Activated CD8-positive, alpha-beta T cell treated with anti-CD3 and anti-CD28 coated beads for 36 hours (primary cell): ENCODE measurements at regions of chr15 and their contacts with region 1.

Region 1: GRCh38 chr15:63891079-63891767 is 57.5 kb upstream of the HERC1 start:
- DNase-seq: peak; percentile 88
- ATAC-seq: peak; percentile 19
- H3K4me3 Mint-ChIP-seq: no peak overlapping the region
- H3K27ac Mint-ChIP-seq: no peak overlapping the region
- H3K4me1 Mint-ChIP-seq: peaks cover 62% of the 10 kb centered on the region
- H3K27me3 Mint-ChIP-seq: no peaks in the 10 kb centered on the region
- CTCF ChIP-seq: peak; percentile 85

Region 2: DNA sequence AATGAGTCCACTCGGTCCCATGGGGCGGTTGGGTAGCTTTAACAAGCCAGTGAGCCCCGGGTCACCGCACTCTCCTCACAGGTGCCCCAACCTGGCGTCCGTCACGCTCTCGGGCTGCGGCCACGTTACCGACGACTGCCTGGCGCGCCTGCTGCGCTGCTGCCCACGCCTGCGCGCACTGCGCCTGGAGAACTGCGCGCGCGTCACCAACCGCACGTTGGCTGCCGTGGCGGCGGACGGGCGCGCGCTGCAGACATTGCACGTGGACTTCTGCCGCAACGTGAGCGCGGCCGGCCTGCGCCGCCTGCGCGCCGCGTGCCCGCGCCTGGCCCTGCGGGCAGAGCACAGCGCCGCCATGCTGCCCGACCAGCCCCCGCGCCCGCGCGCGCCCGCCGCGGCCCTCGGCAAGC is 290.6 kb before region 1 on chr15:
- CTCF ChIA-PET with region 1: no interaction called
- POLR2A ChIA-PET with region 1: no interaction called
- intact Hi-C with region 1: loop called (anchors 10 kb)
- DNase-seq: peak; percentile 93
- ATAC-seq: peak; percentile 76
- H3K4me3 Mint-ChIP-seq: peak overlapping the region; percentile 87
- H3K27ac Mint-ChIP-seq: peak overlapping the region; percentile 96
- H3K4me1 Mint-ChIP-seq: peaks cover 52% of the 10 kb centered on the region
- H3K27me3 Mint-ChIP-seq: no peaks in the 10 kb centered on the region
- CTCF ChIP-seq: no peak

Region 3: GRCh38 chr15:63818191-63818590 is 73.0 kb before region 1 on chr15:
- CTCF ChIA-PET with region 1: interaction called, 10 read pairs
- POLR2A ChIA-PET with region 1: no interaction called
- intact Hi-C with region 1: no loop called
- DNase-seq: no peak
- ATAC-seq: no peak
- H3K4me3 Mint-ChIP-seq: peak overlapping the region; percentile 36
- H3K27ac Mint-ChIP-seq: peak overlapping the region; percentile 56
- H3K4me1 Mint-ChIP-seq: peaks cover 68% of the 10 kb centered on the region
- H3K27me3 Mint-ChIP-seq: no peaks in the 10 kb centered on the region
- CTCF ChIP-seq: no peak

Region 4: GRCh38 chr15:63833021-63833696 is 58.1 kb before region 1 on chr15:
- CTCF ChIA-PET with region 1: interaction called, 8 read pairs
- POLR2A ChIA-PET with region 1: interaction called, 4 read pairs
- intact Hi-C with region 1: loop called (anchors 5 kb)
- DNase-seq: peak; percentile 50
- ATAC-seq: peak; percentile 53
- H3K4me3 Mint-ChIP-seq: peak overlapping the region; percentile 81
- H3K27ac Mint-ChIP-seq: peak overlapping the region; percentile 99
- H3K4me1 Mint-ChIP-seq: peaks cover 41% of the 10 kb centered on the region
- H3K27me3 Mint-ChIP-seq: no peaks in the 10 kb centered on the region
- CTCF ChIP-seq: no peak

Region 5: DNA sequence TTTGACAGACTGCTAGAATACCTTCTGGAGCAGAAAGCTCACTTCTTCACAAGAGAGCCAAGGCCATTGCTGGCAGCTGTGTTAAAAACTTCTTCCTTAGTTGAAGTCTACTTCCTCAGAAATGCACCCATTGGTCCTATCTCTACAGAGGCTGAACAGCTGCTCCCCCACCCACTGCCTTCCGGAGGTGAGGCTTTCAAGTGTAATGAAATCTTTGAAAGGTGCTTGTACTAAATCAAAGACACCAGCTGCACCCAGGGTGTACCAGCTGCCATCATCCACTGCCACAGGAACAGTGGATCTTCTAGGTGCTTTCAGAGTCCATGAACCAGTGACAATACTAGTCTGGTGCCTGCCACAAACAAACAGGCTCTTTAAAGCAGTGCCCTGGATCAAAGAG is 31.1 kb before region 1 on chr15:
- CTCF ChIA-PET with region 1: interaction called, 24 read pairs
- POLR2A ChIA-PET with region 1: interaction called, 4 read pairs
- intact Hi-C with region 1: no loop called
- DNase-seq: peak; percentile 78
- ATAC-seq: peak; percentile 74
- H3K4me3 Mint-ChIP-seq: no peak overlapping the region
- H3K27ac Mint-ChIP-seq: peak overlapping the region; percentile 85
- H3K4me1 Mint-ChIP-seq: peaks cover 35% of the 10 kb centered on the region
- H3K27me3 Mint-ChIP-seq: no peaks in the 10 kb centered on the region
- CTCF ChIP-seq: no peak

Region 6: DNA sequence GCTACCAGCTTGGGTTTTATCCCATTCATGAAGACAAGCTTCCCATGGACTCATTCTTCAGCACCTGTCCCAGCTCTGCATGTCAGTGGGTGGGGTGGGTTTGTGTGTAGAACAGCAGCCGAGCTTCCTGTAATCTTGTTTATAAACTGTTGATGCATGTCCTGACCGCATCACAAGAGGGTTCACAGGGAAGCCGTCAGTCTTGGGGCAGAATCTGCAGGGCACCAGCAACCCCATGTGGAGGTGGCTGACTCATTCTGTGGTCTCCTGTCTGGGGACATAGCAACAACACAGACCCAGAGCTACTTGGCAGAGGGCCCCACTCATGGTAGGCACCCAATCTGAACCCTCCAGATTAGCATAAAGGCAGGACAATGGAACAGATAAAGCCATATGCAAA is 119.5 kb after region 1 on chr15:
- CTCF ChIA-PET with region 1: no interaction called
- POLR2A ChIA-PET with region 1: interaction called, 3 read pairs
- intact Hi-C with region 1: loop called (anchors 5 kb)
- DNase-seq: peak; percentile 95
- ATAC-seq: peak; percentile 88
- H3K4me3 Mint-ChIP-seq: peak overlapping the region; percentile 22
- H3K27ac Mint-ChIP-seq: peak overlapping the region; percentile 88
- H3K4me1 Mint-ChIP-seq: peaks cover 37% of the 10 kb centered on the region
- H3K27me3 Mint-ChIP-seq: no peaks in the 10 kb centered on the region
- CTCF ChIP-seq: no peak

Region 7: GRCh38 chr15:64067564-64068030 is 176.4 kb after region 1 on chr15:
- CTCF ChIA-PET with region 1: interaction called, 26 read pairs
- POLR2A ChIA-PET with region 1: no interaction called
- intact Hi-C with region 1: no loop called
- DNase-seq: peak; percentile 80
- ATAC-seq: peak; percentile 89
- H3K4me3 Mint-ChIP-seq: no peak overlapping the region
- H3K27ac Mint-ChIP-seq: no peak overlapping the region
- H3K4me1 Mint-ChIP-seq: peaks cover 4% of the 10 kb centered on the region
- H3K27me3 Mint-ChIP-seq: no peaks in the 10 kb centered on the region
- CTCF ChIP-seq: peak; percentile 81